H1 (cell line): ENCODE measurements at regions of chr7 and their contacts with region 1.

Region 1: DNA sequence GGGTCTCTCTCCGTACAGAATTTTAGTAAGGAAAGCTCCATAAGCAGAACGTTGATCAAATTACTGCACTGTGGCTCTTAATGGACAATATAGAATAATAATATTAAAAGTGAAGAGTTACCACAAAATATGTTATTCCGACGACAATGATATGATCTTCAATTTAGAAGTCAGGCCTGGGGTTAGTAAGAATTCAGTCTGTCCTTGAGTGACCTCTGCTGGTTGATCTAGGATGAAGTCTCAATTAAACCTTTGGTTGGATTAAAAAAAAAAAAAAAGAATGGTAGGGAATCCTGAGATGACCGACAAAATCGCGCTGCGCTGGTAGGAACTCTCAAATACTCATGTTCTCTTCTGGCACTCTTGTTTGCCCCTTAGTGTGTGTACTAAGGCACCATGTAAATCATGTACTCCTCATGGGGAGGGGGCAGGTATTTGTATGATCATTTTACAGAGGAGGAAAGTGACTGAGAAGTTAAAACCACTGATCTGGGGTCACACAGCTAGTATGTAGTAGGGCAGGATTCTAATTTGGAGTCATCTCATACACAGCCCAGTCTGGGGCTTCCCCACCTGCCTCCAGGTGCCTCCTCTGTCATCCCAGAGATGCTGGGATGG is 161.3 kb upstream of the NPVF start:
- DNase-seq: no peak
- H3K4me3 ChIP-seq: no peak overlapping the region
- H3K27ac ChIP-seq: no peak overlapping the region
- H3K4me1 ChIP-seq: no peaks in the 10 kb centered on the region
- H3K27me3 ChIP-seq: no peaks in the 10 kb centered on the region; a peak in 1 of 7 replicates
- CTCF ChIP-seq: peak in 2 of 3 experiments; percentile 36 to 63; a peak in 2 of 4 replicates
- EP300 ChIP-seq: no peak
- POLR2A ChIP-seq: no peak
- RAD21 ChIP-seq: peak; percentile 83 to 84

Region 2: DNA sequence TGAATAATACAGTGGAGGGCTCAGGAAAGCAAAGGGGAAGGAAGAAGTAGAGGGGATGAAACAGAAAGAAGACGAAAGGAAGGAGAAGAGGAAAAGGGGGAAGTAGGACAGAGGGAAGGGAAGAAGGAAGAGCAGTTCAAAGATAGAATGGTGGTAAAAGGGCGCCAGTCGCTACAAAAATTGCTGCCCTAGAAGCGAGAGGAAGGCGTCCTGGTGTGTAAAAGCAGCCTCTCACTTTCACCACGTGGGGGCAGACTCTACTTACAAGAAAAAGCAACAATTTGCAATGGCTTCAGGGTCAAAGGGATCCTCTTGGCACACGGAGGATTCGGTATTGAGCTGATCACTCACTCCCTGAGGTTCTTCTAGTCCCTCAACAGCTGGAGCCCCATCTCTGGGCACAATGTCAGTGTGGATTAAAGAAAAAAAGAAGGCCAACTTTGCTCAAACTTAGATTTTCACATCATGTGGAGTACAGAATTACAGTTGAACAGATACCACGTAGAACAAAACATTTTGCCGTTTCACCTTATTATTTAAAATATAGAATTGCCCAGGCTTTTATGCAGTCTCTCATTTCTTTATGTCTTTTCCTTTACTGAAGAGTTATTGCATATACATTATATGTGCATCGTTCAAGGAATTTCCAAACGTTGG is 129.9 kb before region 1 on chr7:
- CTCF ChIA-PET with region 1: interaction called, 158 read pairs
- POLR2A ChIA-PET with region 1: no interaction called
- DNase-seq: peak; percentile 23 to 66
- H3K4me3 ChIP-seq: no peak overlapping the region
- H3K27ac ChIP-seq: no peak overlapping the region
- H3K4me1 ChIP-seq: no peaks in the 10 kb centered on the region
- H3K27me3 ChIP-seq: no peaks in the 10 kb centered on the region; a peak in 1 of 7 replicates
- CTCF ChIP-seq: peak; percentile 55 to 94 (median 93)
- EP300 ChIP-seq: no peak
- POLR2A ChIP-seq: no peak
- RAD21 ChIP-seq: peak; percentile 97 to 99

Region 3: DNA sequence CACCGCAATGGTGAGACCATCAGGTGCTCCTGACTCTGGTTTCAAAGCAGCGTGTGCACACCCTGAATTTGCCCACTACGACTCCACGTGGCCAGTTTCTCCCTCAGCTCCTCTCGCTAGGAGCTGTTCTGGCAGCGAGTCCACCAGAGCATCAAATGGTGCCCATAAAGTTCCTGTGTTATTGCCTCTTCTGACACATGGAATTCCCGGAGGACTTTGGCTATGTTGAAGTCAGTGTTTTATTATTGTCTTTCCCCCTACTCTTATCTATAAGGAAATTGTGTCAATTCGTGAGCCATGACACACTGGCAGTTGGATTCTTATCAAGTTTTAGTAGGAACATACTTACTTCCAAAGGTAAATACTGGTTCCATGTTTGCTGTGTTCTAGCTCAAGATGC is 107.4 kb before region 1 on chr7:
- CTCF ChIA-PET with region 1: interaction called, 13 read pairs
- POLR2A ChIA-PET with region 1: no interaction called
- DNase-seq: no peak
- H3K4me3 ChIP-seq: no peak overlapping the region
- H3K27ac ChIP-seq: no peak overlapping the region
- H3K4me1 ChIP-seq: no peaks in the 10 kb centered on the region
- H3K27me3 ChIP-seq: no peaks in the 10 kb centered on the region
- CTCF ChIP-seq: no peak
- EP300 ChIP-seq: no peak
- POLR2A ChIP-seq: no peak
- RAD21 ChIP-seq: no peak

Region 4: GRCh38 chr7:25321424-25321823 is 68.2 kb before region 1 on chr7:
- CTCF ChIA-PET with region 1: interaction called, 12 read pairs
- POLR2A ChIA-PET with region 1: no interaction called
- DNase-seq: no peak
- H3K4me3 ChIP-seq: no peak overlapping the region
- H3K27ac ChIP-seq: no peak overlapping the region
- H3K4me1 ChIP-seq: no peaks in the 10 kb centered on the region; a peak in 1 of 7 replicates
- H3K27me3 ChIP-seq: peaks cover 0 to 1% (median 0%) of the 10 kb centered on the region in 4 experiments; a peak in 1 of 7 replicates
- CTCF ChIP-seq: no peak
- EP300 ChIP-seq: no peak
- POLR2A ChIP-seq: no peak
- RAD21 ChIP-seq: no peak

Region 5: DNA sequence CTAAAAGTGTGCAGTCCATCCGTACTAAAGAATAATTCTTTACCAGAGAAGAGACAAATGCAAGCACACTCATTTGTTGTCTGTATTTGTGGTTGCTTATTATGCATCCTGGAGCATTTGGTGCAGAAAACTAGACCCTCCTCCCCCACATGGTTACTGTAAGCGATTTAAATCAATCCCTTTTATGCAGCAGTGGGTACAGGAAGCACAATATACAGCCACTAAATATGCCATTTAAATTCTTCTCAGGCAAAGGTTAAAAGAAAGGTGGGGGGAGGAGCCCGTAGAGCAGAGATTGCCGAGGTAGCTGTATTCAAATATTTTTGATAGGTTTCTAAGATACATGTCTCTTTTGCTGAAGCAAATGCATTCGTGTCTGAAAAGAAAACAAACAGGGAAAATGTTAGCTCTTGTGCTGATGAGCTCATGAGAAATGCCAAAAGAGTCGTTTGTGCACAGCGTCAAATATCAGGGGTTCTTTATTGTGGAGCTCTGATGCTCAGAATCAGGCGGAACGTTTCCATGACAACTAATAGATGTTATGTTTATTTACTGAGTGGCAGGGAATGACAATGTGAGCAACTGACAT is 30.0 kb before region 1 on chr7:
- CTCF ChIA-PET with region 1: interaction called, 13 read pairs
- POLR2A ChIA-PET with region 1: no interaction called
- DNase-seq: no peak
- H3K4me3 ChIP-seq: no peak overlapping the region
- H3K27ac ChIP-seq: no peak overlapping the region
- H3K4me1 ChIP-seq: no peaks in the 10 kb centered on the region
- H3K27me3 ChIP-seq: no peaks in the 10 kb centered on the region
- CTCF ChIP-seq: no peak
- EP300 ChIP-seq: no peak
- POLR2A ChIP-seq: no peak
- RAD21 ChIP-seq: no peak

Region 6: GRCh38 chr7:25469669-25470068 is 80.1 kb after region 1 on chr7:
- CTCF ChIA-PET with region 1: no interaction called
- POLR2A ChIA-PET with region 1: no interaction called
- DNase-seq: no peak
- H3K4me3 ChIP-seq: no peak overlapping the region
- H3K27ac ChIP-seq: no peak overlapping the region
- H3K4me1 ChIP-seq: no peaks in the 10 kb centered on the region
- H3K27me3 ChIP-seq: peaks cover 0 to 2% (median 0%) of the 10 kb centered on the region in 4 experiments; a peak in 1 of 7 replicates
- CTCF ChIP-seq: no peak
- EP300 ChIP-seq: no peak
- POLR2A ChIP-seq: no peak
- RAD21 ChIP-seq: no peak

Region 7: GRCh38 chr7:25545124-25546008 is 155.8 kb after region 1 on chr7:
- CTCF ChIA-PET with region 1: interaction called, 12 read pairs
- POLR2A ChIA-PET with region 1: no interaction called
- DNase-seq: no peak
- H3K4me3 ChIP-seq: no peak overlapping the region
- H3K27ac ChIP-seq: no peak overlapping the region
- H3K4me1 ChIP-seq: no peaks in the 10 kb centered on the region
- H3K27me3 ChIP-seq: no peaks in the 10 kb centered on the region
- CTCF ChIP-seq: peak in 1 of 3 experiments; percentile 14; a peak in 1 of 4 replicates
- EP300 ChIP-seq: no peak
- POLR2A ChIP-seq: no peak
- RAD21 ChIP-seq: no peak

Region 8: DNA sequence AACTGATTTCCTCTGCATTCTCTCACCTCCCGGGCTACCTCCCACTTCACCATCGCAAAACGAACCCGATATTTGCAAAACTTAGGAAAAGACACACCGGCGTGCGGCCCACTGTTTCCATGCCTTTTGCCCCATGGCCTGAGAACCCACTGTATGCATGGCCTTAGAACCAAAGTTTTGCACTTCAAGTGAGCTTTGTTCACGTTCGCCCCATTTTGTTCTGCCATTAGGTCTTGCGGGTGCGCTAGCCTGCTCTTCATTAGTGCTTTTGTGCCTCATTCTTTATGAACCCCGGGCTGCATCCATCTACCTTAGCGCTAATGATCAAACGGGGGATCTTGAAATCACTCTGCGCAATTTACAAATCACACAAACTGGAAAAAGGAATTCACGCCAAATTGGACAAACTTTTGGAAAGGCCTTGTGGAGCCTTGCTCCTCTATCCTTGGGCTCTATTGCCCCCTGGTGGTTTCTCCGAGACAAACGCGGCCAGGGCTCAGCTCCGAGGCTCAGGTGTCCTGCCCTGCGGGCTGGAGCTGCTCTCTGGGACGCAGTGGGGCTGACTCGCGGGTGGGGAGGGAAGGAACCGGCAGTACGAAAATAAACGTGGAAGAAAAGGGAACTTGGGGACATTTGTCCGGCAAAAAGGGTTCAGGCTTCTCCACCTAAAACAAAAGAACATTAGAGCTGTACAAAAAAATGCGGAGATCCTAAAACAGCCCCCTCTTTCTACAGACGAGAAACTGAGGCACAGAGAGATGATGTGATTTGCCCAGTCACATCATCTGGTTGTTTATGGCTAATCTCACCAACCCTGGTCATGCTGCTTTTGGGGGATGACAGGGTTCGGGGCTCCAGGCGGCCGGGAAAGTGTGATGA is 462.0 kb after region 1 on chr7:
- CTCF ChIA-PET with region 1: interaction called, 10 read pairs
- POLR2A ChIA-PET with region 1: no interaction called
- DNase-seq: peak in 1 of 2 experiments; percentile 91
- H3K4me3 ChIP-seq: peak overlapping the region; percentile 22 to 68 (median 34)
- H3K27ac ChIP-seq: no peak overlapping the region
- H3K4me1 ChIP-seq: peaks cover 0 to 5% (median 3%) of the 10 kb centered on the region in 4 experiments; a peak in 5 of 7 replicates
- H3K27me3 ChIP-seq: peaks cover 16 to 44% (median 32%) of the 10 kb centered on the region in 4 experiments; a peak in 6 of 7 replicates
- CTCF ChIP-seq: peak; percentile 74 to 89 (median 88)
- EP300 ChIP-seq: no peak
- POLR2A ChIP-seq: no peak
- RAD21 ChIP-seq: peak; percentile 94 to 95

Region 9: GRCh38 chr7:26061688-26062150 is 672.1 kb after region 1 on chr7:
- CTCF ChIA-PET with region 1: no interaction called
- POLR2A ChIA-PET with region 1: no interaction called
- DNase-seq: peak; percentile 53 to 87
- H3K4me3 ChIP-seq: no peak overlapping the region
- H3K27ac ChIP-seq: no peak overlapping the region
- H3K4me1 ChIP-seq: peaks cover 0 to 3% (median 2%) of the 10 kb centered on the region in 4 experiments; a peak in 3 of 7 replicates
- H3K27me3 ChIP-seq: no peaks in the 10 kb centered on the region
- CTCF ChIP-seq: peak; percentile 62 to 90 (median 80)
- EP300 ChIP-seq: no peak
- POLR2A ChIP-seq: no peak
- RAD21 ChIP-seq: peak; percentile 76 to 87